IMR-90 (cell line): ENCODE measurements at regions of chr16 and their contacts with region 1.

Region 1: DNA sequence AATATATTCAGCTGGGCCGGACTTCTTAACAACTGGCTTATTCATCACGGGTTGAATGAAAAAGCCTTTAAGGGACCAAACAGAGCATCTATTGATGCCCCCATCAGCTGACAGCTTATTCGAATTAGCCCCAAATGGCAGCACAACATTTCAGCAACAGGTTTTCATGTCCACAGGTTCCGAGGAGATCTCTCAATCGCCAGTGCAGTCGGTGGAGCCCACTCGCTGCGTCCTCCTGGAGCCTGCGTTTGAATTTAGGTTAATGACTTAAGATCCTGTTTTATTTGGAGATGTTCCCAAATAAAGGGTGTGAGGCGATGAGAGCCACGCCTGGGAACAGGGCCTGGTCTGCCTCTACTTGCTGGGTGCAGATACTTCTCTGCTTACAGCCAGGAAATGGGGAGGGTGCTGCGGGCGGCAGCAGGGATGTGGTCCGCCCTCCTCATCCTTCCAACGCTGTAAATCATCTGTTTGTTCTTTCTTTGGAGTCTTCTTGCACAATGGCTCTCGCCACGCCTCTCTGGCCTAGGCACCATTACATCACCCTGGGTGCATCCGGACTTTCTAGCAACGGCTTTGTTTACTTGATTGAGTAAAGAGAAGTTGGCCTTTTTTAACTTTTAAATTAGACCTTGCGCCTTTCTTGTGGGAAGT is 22.6 kb downstream of the NDE1 start:
- DNase-seq: peak; percentile 96
- ATAC-seq: peak; percentile 99
- H3K4me3 ChIP-seq: no peak overlapping the region
- H3K27ac ChIP-seq: peak overlapping the region; percentile 64
- H3K4me1 ChIP-seq: peaks cover 11% of the 10 kb centered on the region
- H3K27me3 ChIP-seq: no peaks in the 10 kb centered on the region
- CTCF ChIP-seq: no peak
- POLR2A ChIP-seq: no peak
- RAD21 ChIP-seq: no peak

Region 2: GRCh38 chr16:15539197-15539596 is 133.4 kb before region 1 on chr16:
- CTCF ChIA-PET with region 1: no interaction called
- POLR2A ChIA-PET with region 1: no interaction called
- dilution Hi-C with region 1: no loop called
- in situ Hi-C with region 1: no loop called
- intact Hi-C with region 1: no loop called
- DNase-seq: no peak
- ATAC-seq: no peak
- H3K4me3 ChIP-seq: no peak overlapping the region
- H3K27ac ChIP-seq: no peak overlapping the region
- H3K4me1 ChIP-seq: 0 out of 2 replicates have a peak, but pooled peaks cover under 1% of the 10 kb centered on the region
- H3K27me3 ChIP-seq: no peaks in the 10 kb centered on the region
- CTCF ChIP-seq: no peak
- POLR2A ChIP-seq: no peak
- RAD21 ChIP-seq: no peak

Region 3: DNA sequence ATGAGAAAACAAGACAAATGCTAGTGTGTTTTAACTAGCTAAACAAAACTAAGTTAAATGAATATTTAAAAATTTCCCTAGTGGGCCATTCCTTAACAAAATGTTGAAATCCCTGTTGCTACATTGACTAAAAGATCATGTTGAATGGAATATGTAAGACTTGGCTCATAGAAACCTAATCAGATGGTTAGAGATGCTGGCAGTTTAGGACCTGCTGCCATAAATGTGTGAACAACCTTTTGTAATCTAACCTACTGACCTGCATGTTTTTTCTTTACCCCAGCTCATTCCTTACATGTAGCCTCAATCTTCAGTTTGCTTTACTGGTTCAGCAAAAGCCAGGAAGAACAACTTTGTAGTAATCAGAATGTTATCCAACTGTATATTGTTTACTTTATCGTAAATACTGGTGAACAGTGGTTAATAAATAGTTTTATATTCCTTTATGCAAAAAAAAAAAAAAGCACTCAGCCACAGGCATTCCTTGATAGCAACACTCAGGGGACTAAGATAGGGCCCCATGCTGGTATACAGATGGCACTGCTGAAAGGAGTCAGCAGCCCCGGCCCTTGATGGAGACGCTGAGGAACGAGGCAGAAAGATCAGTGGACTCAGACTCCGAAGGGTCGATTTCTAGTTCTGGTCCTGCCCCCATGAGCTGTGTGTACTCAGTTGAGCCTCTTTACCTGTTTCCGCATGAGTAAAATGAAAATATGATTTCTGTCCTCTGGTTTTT is 107.9 kb before region 1 on chr16:
- CTCF ChIA-PET with region 1: no interaction called
- POLR2A ChIA-PET with region 1: no interaction called
- dilution Hi-C with region 1: no loop called
- in situ Hi-C with region 1: no loop called
- intact Hi-C with region 1: no loop called
- DNase-seq: peak; percentile 35
- ATAC-seq: peak; percentile 64
- H3K4me3 ChIP-seq: no peak overlapping the region
- H3K27ac ChIP-seq: no peak overlapping the region
- H3K4me1 ChIP-seq: peaks cover 2% of the 10 kb centered on the region; the same call in 1 of the 2 replicates
- H3K27me3 ChIP-seq: no peaks in the 10 kb centered on the region
- CTCF ChIP-seq: no peak
- POLR2A ChIP-seq: no peak
- RAD21 ChIP-seq: no peak

Region 4: DNA sequence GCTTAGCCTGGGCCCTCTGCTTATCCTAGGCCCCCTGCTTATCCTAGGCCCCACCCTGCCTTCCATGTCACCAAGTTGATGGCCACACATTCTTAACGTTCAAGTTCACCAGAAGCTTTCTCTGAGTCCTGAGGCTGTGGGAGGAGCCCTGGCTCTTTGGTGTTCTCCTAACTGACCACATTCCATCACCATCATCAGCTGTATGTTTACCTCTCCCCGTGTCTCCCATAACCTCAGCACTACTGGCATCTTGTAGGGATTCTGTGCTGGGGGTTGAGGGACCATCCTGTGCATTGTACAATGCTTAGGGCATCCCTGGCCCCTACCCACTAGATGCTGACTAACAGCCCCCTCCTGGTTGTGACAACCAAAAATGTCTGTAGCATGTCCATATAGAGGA is 76.7 kb after region 1 on chr16:
- CTCF ChIA-PET with region 1: no interaction called
- POLR2A ChIA-PET with region 1: interaction called, 12 read pairs
- dilution Hi-C with region 1: no loop called
- in situ Hi-C with region 1: no loop called
- intact Hi-C with region 1: no loop called
- DNase-seq: peak; percentile 21
- ATAC-seq: peak; percentile 80
- H3K4me3 ChIP-seq: no peak overlapping the region
- H3K27ac ChIP-seq: no peak overlapping the region
- H3K4me1 ChIP-seq: no peaks in the 10 kb centered on the region
- H3K27me3 ChIP-seq: no peaks in the 10 kb centered on the region
- CTCF ChIP-seq: no peak
- POLR2A ChIP-seq: no peak
- RAD21 ChIP-seq: no peak

Region 5: DNA sequence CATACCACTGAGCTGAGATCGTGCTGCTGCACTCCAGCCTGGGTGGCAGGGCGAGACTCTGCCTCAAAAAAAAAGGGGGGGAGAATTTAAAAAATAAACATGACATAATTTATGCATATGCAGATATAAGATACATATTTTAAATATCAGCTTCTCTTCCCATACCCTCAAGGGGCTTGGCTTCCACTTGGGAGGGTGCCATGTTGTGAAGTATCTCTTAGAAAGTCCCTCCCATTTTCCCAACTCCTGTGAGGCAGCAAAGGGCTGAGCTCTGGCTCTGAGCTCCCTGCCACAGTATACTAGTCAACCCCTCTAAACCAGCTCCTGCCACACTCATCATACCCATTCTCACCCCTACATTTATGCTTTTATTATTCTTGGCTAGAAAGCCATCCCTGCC is 144.8 kb after region 1 on chr16:
- CTCF ChIA-PET with region 1: no interaction called
- POLR2A ChIA-PET with region 1: no interaction called
- dilution Hi-C with region 1: no loop called
- in situ Hi-C with region 1: no loop called
- intact Hi-C with region 1: no loop called
- DNase-seq: no peak
- ATAC-seq: no peak
- H3K4me3 ChIP-seq: no peak overlapping the region
- H3K27ac ChIP-seq: no peak overlapping the region
- H3K4me1 ChIP-seq: no peaks in the 10 kb centered on the region
- H3K27me3 ChIP-seq: peaks cover 7% of the 10 kb centered on the region; the same call in 1 of the 2 replicates
- CTCF ChIP-seq: no peak
- POLR2A ChIP-seq: no peak
- RAD21 ChIP-seq: no peak